Cardiac septum (tissue), 1 donor: ENCODE measurements at regions of chr6 and their contacts with region 1.

Region 1: GRCh38 chr6:146913842-146914488 is 290.3 kb upstream of the STXBP5 start:
- DNase-seq: peak; percentile 86

Region 2: GRCh38 chr6:146709036-146709622 is 204.8 kb before region 1 on chr6:
- intact Hi-C with region 1: no loop called
- DNase-seq: no peak

Region 3: DNA sequence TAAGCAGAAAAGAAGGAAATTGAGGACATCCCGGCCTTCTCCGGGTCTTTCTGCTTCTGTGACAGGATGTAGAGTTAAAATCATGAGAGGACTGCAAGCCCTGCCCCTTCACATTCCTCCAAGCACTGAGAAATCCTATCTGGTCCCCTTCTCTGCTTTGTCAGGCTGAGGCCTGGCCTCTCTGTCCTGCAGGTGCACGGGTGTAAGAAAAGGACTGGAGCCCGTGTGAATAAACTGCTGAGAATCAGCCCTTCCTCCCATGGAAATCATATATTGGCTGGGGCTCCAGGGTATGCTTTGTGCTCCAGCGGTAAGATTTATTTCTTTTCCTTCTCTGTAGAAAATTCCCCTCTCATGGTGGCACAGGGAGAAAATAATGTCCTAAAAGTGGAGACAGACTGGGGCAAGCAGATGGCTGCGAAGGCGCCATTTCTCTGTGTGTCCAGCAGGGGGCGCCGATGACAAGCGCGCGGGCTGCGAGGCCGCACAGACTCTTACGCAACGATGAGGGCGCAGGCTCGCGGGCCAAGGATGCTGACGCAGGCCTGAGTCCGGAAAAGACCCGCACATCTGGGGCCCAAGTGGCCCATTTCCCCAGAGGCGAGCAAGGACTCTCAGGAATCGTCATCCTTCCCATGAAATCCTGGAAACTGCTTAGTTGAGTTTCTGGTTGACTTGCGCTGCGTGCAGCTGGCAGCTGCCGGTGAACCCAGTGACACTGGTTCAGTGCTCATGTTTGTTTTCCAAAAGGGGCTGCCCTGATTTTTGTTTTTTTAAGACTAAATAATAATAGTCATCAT is 56.6 kb before region 1 on chr6:
- intact Hi-C with region 1: loop called (anchors 5 kb)
- DNase-seq: peak; percentile 94

Region 4: DNA sequence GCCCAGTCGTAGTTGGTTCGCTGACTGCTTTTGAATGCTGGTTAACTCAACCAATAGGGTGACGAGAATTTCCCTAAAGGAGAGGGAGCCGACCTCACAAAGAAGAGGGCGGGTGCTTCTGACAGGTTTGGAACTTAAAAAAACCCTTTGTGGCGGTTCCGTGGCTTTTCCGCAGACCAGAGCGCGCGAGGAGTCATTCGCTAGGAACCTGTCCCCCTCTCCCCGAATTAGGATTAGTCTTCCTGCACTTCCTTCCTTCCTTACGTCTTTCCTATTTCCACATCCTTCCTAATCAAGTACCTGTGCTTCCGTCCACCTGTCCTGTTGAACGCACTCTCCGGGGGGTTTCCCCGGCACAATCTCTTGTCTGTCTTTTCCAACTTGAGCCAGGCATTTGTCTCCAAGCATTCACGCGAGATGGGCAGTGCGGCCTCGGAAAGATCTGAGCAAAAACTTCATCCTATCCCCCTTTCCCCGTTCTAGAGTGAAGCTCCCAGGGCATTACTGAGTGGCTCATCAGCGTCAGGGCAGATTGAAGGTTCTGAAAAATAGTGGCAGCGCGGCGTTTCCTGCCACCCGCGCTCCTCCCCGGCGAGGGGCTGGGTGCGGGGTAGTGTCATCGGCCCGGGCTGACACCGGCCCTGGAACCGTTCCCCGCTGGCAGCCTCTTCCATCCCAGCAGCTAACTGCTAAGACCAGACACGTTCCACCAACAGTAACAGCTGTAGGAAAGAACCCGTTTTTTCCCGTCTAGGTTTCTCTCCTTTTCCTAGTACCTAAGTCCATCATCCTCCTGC is 288.7 kb after region 1 on chr6:
- intact Hi-C with region 1: loop called (anchors 5 kb)
- DNase-seq: peak; percentile 90

Region 5: GRCh38 chr6:147285087-147285855 is 371.3 kb after region 1 on chr6:
- intact Hi-C with region 1: loop called (anchors 10 kb)
- DNase-seq: no peak